Activated CD8-positive, alpha-beta T cell treated with anti-CD3 and anti-CD28 coated beads for 36 hours (primary cell): ENCODE measurements at regions of chr10 and their contacts with region 1.

Region 1: GRCh38 chr10:119131512-119132240 is 27.8 kb downstream of the DENND10 start:
- DNase-seq: peak; percentile 80
- ATAC-seq: peak; percentile 90
- H3K4me3 Mint-ChIP-seq: peak overlapping the region; percentile 80
- H3K27ac Mint-ChIP-seq: peak overlapping the region; percentile 99
- H3K4me1 Mint-ChIP-seq: peaks cover 40% of the 10 kb centered on the region
- H3K27me3 Mint-ChIP-seq: no peaks in the 10 kb centered on the region
- CTCF ChIP-seq: no peak

Region 2: DNA sequence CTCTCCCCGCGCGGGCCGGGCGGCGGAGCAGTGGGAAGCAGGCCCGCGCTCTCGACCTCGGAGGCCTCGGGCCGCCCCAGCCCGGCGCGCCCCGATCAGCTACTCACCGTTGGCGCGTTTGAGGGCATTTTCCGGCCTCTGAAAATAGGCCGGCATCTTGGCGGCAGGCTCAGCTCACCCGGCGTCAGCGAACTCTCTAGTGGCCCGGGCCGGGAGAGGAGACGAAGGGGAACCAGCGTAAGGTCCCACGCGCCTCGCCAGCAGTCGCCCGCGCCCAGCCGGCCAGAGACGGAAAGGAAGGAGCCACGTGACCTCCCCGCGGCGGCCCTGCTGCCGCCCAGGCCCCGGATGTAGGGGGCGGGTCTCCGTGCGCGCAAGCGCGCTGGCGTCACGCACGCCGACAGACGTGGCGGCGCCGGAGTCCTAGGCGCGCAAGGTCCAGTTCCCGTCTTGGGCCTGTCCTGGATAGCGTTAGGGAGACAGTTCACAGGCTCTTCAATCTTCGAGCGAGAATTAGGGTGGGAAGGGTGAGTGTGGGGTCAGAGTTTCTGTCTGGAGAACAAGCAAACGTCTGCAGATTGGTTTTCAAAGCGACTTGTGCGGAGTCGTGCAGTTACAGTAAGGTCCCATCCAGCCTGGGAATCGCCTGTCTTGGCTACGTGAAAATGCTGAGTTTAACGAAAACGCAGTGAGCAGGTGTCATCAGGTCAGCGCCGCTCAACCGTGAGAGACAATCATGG is 51.0 kb before region 1 on chr10 and contains the start of gene EIF3A:
- CTCF ChIA-PET with region 1: no interaction called
- POLR2A ChIA-PET with region 1: interaction called, 20 read pairs
- intact Hi-C with region 1: no loop called
- DNase-seq: peak; percentile 90
- ATAC-seq: peak; percentile 81
- H3K4me3 Mint-ChIP-seq: peak within 1 kb of the TSS; percentile 87
- H3K27ac Mint-ChIP-seq: peak within 1 kb of the TSS; percentile 95
- H3K4me1 Mint-ChIP-seq: peaks cover 25% of the 10 kb centered on the region
- H3K27me3 Mint-ChIP-seq: no peaks in the 10 kb centered on the region
- CTCF ChIP-seq: no peak
- total RNA-seq, gene EIF3A: 127 to 131 TPM

Region 3: DNA sequence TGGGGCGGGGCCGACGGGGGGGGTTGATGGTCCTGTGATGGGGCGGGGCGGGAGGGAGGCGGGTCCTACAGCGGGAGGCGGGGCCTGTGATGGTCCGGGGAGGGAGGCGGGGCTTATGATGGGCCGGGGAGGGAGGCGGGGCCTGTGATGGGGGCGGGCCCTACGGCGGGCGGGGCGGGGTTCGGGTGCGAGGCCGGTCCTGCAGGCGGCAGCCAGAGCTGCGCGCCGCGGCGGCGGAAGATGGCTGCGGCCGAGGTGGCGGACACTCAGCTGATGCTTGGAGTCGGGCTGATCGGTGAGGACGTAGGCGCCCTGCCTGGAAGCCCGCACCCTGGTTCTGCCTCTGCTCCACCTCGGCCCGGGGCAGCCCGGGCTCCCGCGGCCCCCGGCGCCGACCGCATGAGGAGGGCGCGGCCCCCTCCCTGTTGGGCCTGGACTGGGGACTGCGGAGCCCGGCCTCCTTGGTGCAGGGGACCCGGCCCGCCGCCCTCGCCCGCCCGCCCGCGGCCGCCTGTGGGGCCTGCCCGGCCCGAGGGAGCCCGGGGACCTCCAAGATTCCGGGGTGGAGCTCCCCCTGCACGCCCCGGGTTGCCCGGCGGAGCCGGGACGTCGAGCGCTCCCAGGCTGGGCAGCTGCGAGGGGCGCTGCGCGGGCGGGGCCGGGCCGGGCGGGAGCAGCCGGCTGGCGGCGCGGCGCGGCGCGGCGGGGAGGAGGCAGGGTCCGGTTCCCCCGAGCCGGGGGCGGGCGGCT is 27.6 kb before region 1 on chr10 and contains the start of gene DENND10:
- CTCF ChIA-PET with region 1: interaction called, 11 read pairs
- POLR2A ChIA-PET with region 1: interaction called, 14 read pairs
- intact Hi-C with region 1: no loop called
- DNase-seq: peak; percentile 83
- ATAC-seq: peak; percentile 94
- H3K4me3 Mint-ChIP-seq: peak within 1 kb of the TSS; percentile 72
- H3K27ac Mint-ChIP-seq: no peak within 1 kb of the TSS
- H3K4me1 Mint-ChIP-seq: peaks cover 11% of the 10 kb centered on the region
- H3K27me3 Mint-ChIP-seq: no peaks in the 10 kb centered on the region
- CTCF ChIP-seq: no peak
- total RNA-seq, gene DENND10: 16.9 to 18.6 TPM

Region 4: DNA sequence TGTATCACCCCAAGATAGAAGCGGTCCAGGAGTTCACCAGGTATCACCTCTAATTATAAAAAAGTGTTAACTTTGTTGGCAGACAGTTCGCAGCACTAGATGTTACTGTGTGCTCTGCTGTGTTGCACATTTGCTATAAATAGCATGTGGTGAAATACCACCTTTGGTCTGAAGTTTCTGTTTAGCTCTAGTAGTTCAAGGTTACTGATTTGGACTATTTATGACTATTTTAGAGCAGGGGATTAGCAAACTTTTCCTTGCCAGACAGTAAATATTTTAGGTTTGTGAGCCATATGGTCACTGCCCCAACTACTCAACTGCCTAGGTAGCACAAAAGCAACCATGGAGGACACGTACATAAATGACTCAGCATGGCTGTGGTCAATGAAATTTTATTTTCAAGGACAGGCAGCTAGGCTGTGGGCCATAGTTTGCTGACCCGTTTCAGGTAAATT is 11.2 kb before region 1 on chr10:
- CTCF ChIA-PET with region 1: interaction called, 5 read pairs
- POLR2A ChIA-PET with region 1: interaction called, 11 read pairs
- intact Hi-C with region 1: no loop called
- DNase-seq: no peak
- ATAC-seq: peak; percentile 68
- H3K4me3 Mint-ChIP-seq: no peak overlapping the region
- H3K27ac Mint-ChIP-seq: peak overlapping the region; percentile 46
- H3K4me1 Mint-ChIP-seq: peaks cover 10% of the 10 kb centered on the region
- H3K27me3 Mint-ChIP-seq: no peaks in the 10 kb centered on the region
- CTCF ChIP-seq: no peak

Region 5: GRCh38 chr10:119165171-119166110 is 33.8 kb after region 1 on chr10 and contains the start of gene SFXN4:
- CTCF ChIA-PET with region 1: interaction called, 5 read pairs
- POLR2A ChIA-PET with region 1: interaction called, 14 read pairs
- intact Hi-C with region 1: no loop called
- DNase-seq: peak; percentile 80
- ATAC-seq: peak; percentile 92
- H3K4me3 Mint-ChIP-seq: peak within 1 kb of the TSS; percentile 79
- H3K27ac Mint-ChIP-seq: peak within 1 kb of the TSS; percentile 95
- H3K4me1 Mint-ChIP-seq: peaks cover 37% of the 10 kb centered on the region
- H3K27me3 Mint-ChIP-seq: no peaks in the 10 kb centered on the region
- CTCF ChIP-seq: no peak
- total RNA-seq, gene SFXN4: 45.9 to 50.3 TPM

Region 6: GRCh38 chr10:119178372-119179119 is 46.9 kb after region 1 on chr10 and contains the start of gene PRDX3:
- CTCF ChIA-PET with region 1: no interaction called
- POLR2A ChIA-PET with region 1: interaction called, 10 read pairs
- intact Hi-C with region 1: no loop called
- DNase-seq: peak; percentile 97
- ATAC-seq: peak; percentile 98
- H3K4me3 Mint-ChIP-seq: peak within 1 kb of the TSS; percentile 87
- H3K27ac Mint-ChIP-seq: peak within 1 kb of the TSS; percentile 92
- H3K4me1 Mint-ChIP-seq: peaks cover 29% of the 10 kb centered on the region
- H3K27me3 Mint-ChIP-seq: no peaks in the 10 kb centered on the region
- CTCF ChIP-seq: no peak
- total RNA-seq, gene PRDX3: 198 to 203 TPM